ENCODE measurements at regions of chr12 and their contacts with region 1.

Region 1: DNA sequence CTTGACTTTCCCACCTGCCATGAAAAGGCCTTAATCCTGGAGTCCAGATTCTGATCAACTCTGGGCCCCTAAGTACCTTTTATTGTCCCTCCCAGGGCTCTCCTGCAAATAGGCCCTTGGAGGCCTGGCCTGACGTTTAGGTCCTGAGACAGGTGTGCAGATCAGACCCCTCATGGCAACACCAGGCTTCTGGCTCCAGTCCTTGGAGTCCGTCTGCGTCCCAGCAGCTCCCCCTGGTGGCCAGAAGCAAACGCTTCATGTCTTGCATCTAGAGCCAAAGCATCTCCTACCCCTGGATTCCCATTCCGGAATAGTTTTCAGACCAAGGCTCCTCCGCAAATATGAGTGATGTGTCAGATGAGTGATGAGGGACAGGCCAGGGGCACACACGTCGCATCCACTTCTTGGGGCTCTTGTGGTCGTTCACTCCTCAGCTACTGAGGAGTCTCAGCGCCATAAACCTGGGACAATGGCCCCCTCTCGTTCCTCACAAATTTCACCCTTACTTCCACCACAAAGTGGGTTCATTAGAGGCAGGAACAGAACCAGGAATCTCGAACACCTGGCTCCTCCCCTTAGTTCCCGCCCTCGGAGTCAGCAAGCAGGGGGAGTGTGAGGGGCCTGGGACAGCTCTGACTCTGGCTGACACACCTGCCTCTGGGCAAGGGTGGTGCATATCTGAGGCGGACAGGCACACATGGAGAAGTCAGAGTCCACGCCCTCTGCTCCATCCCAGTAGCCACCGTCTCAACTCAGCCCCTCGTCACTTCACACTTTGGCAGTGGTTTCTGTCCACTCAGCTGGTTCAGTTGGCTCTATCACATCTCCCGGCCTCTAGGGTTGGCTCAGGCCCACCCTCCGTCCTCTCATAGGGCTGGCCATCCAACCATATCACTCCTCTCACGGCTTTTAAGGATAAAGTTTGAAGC is 77.9 kb upstream of the PWP1 start:
- DNase-seq: peak; percentile 55
- H3K4me3 ChIP-seq: no peak overlapping the region
- H3K27ac ChIP-seq: no peak overlapping the region
- H3K4me1 ChIP-seq: peaks cover 3% of the 10 kb centered on the region
- H3K27me3 ChIP-seq: no peaks in the 10 kb centered on the region
- CTCF ChIP-seq: peak; percentile 95 to 96

Region 2: DNA sequence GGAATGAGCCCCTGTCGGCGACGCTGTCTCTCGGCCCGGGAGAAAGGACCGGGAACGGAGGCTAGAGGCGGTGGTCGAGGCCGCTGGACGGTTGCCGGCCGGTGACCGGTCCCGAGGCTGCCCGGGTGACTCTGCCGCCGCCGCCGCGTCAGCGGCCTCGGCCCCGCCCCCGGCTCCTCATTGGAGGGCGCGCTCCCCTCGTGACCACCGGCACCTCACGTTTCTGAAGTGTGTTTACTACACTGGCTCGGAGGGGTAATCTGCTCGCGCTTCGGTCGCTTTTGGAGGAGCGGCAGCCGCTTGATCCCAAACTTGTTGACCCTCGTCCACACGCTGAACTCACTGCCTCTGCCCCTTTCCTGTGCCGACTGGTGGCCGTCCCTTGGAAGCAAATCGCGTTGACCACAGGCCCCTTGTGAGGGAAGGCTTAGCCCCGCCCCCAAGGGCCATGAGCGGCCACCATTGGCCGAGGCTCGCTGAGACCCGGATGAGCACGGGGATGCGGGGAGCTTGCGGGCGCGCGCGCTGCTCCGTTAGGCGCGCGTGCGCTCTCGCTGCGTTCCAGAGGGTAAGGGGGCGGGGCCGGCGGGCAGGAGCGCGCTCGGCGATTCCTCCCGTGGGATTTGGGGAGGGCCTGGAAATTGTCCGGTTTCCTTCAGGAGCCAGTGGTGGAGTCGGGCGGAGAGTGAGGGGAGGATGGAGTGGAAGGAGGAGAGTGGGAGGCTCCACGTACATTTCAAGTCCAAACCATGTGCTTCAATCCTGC is 514.1 kb before region 1 on chr12 and contains the start of gene CRY1:
- CTCF ChIA-PET with region 1: no interaction called
- dilution Hi-C with region 1: no loop called
- in situ Hi-C with region 1: no loop called
- intact Hi-C with region 1: loop called (anchors 1 kb)
- DNase-seq: peak; percentile 94
- H3K4me3 ChIP-seq: peak within 1 kb of the TSS; percentile 59 to 75 (median 65)
- H3K27ac ChIP-seq: peak within 1 kb of the TSS; percentile 94
- H3K4me1 ChIP-seq: peaks cover 24% of the 10 kb centered on the region
- H3K27me3 ChIP-seq: no peaks in the 10 kb centered on the region
- CTCF ChIP-seq: no peak
- total RNA-seq, gene CRY1: 10.0 to 12.3 TPM

Region 3: GRCh38 chr12:107131832-107132616 is 475.7 kb before region 1 on chr12:
- CTCF ChIA-PET with region 1: interaction called, 7 read pairs
- dilution Hi-C with region 1: no loop called
- in situ Hi-C with region 1: loop called (anchors 5 kb)
- intact Hi-C with region 1: loop called (anchors 1 kb)
- DNase-seq: peak; percentile 53
- H3K4me3 ChIP-seq: no peak overlapping the region
- H3K27ac ChIP-seq: no peak overlapping the region
- H3K4me1 ChIP-seq: no peaks in the 10 kb centered on the region
- H3K27me3 ChIP-seq: no peaks in the 10 kb centered on the region
- CTCF ChIP-seq: peak; percentile 87 to 95

Region 4: DNA sequence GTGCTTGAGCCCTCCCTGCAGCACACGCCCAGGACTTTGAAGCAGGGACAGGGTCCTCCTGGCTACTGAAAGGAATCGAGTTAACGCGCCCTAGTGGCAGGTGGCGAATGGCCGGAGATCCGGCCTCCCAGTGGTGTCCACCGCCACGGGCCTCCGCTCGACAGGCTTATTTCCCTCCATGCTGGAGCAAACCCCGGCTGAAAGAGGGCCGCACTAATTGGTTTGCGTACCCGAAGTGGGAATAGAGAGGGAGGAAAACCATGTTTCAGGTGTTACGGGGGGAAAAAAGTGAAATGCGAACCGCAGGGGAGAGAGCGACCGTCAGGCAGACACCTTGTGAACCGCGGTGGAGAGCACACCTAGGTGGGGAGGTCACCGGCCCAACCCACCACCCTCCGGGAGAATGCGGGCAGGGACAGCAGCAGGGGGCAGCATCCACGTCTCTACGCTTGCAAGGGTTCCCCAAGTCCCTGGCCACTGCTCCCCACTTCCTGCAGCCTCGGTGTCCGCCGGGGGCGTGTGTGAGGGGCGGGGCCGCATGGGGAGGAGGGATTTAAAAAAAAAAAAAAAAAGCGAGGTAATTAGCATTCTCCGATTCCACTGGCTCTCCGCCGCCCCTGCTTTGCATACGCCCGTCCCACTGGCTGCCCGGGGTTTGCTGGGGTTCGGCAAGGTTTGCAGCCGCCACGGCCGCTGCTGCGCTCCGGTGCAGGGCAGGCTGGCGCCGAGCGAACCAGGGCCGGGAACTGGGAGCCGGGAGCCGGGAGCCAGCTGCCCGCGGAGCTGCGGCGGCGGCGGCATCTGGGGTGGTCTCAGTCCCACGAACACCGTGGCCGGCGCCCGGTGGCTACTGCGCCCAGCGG is 289.7 kb before region 1 on chr12:
- CTCF ChIA-PET with region 1: no interaction called
- dilution Hi-C with region 1: no loop called
- in situ Hi-C with region 1: no loop called
- intact Hi-C with region 1: loop called (anchors 2 kb)
- DNase-seq: peak; percentile 94
- H3K4me3 ChIP-seq: peak overlapping the region; percentile 57 to 82 (median 76)
- H3K27ac ChIP-seq: peak overlapping the region; percentile 18
- H3K4me1 ChIP-seq: peaks cover 20% of the 10 kb centered on the region
- H3K27me3 ChIP-seq: peaks cover 2% of the 10 kb centered on the region
- CTCF ChIP-seq: peak; percentile 15 to 57

Region 5: GRCh38 chr12:107564946-107565345 is 42.8 kb before region 1 on chr12:
- CTCF ChIA-PET with region 1: no interaction called
- dilution Hi-C with region 1: no loop called
- in situ Hi-C with region 1: no loop called
- intact Hi-C with region 1: loop called (anchors 2 kb)
- DNase-seq: peak; percentile 23
- H3K4me3 ChIP-seq: no peak overlapping the region
- H3K27ac ChIP-seq: no peak overlapping the region
- H3K4me1 ChIP-seq: peaks cover 20% of the 10 kb centered on the region
- H3K27me3 ChIP-seq: no peaks in the 10 kb centered on the region
- CTCF ChIP-seq: peak; percentile 71 to 87

Measured in mammary epithelial cell (primary cell).